T-cell (primary cell): ENCODE measurements at regions of chr21 and their contacts with region 1.

Region 1: GRCh38 chr21:30058928-30059327 is 107.7 kb downstream of the CLDN17 start:
- DNase-seq: no peak
- ATAC-seq: no peak
- H3K4me3 ChIP-seq: no peak overlapping the region
- H3K4me3 Mint-ChIP-seq: no peak overlapping the region
- H3K27ac ChIP-seq: no peak overlapping the region
- H3K27ac Mint-ChIP-seq: no peak overlapping the region
- H3K4me1 ChIP-seq: no peaks in the 10 kb centered on the region
- H3K4me1 Mint-ChIP-seq: no peaks in the 10 kb centered on the region
- H3K27me3 ChIP-seq: no peaks in the 10 kb centered on the region
- H3K27me3 Mint-ChIP-seq: peaks cover 0 to 3% of the 10 kb centered on the region in 2 donors

Region 2: GRCh38 chr21:29677326-29677725 is 381.6 kb before region 1 on chr21:
- CTCF ChIA-PET with region 1: no interaction called
- POLR2A ChIA-PET with region 1: no interaction called
- DNase-seq: no peak
- ATAC-seq: no peak
- H3K4me3 ChIP-seq: no peak overlapping the region
- H3K4me3 Mint-ChIP-seq: no peak overlapping the region
- H3K27ac ChIP-seq: no peak overlapping the region
- H3K27ac Mint-ChIP-seq: no peak overlapping the region
- H3K4me1 ChIP-seq: no peaks in the 10 kb centered on the region
- H3K4me1 Mint-ChIP-seq: no peaks in the 10 kb centered on the region
- H3K27me3 ChIP-seq: no peaks in the 10 kb centered on the region
- H3K27me3 Mint-ChIP-seq: peaks cover 0 to 6% of the 10 kb centered on the region in 2 donors

Region 3: GRCh38 chr21:29786496-29787360 is 272.2 kb before region 1 on chr21:
- CTCF ChIA-PET with region 1: no interaction called
- POLR2A ChIA-PET with region 1: no interaction called
- DNase-seq: no peak
- ATAC-seq: no peak
- H3K4me3 ChIP-seq: no peak overlapping the region
- H3K4me3 Mint-ChIP-seq: no peak overlapping the region
- H3K27ac ChIP-seq: no peak overlapping the region
- H3K27ac Mint-ChIP-seq: no peak overlapping the region
- H3K4me1 ChIP-seq: no peaks in the 10 kb centered on the region
- H3K4me1 Mint-ChIP-seq: no peaks in the 10 kb centered on the region
- H3K27me3 ChIP-seq: no peaks in the 10 kb centered on the region
- H3K27me3 Mint-ChIP-seq: peaks cover 0 to 3% of the 10 kb centered on the region in 2 donors

Region 4: DNA sequence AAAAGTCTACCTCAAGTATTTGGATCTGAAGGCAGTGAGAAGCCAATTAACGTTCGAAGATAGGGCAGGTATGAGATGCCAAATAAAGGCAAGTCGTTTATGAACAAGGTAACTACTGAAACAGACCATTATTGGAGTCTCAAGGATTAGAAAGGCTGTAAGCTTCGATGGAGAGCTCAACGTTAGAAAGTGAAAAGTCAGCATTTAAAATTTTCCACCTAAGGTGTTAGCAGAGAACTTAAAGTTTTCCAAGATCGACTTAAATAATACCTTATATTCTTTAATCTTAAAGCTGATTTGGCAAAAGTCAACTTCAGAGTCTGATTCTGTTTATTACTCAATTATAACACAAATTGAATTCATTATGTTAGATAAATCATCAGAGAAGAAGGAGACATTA is 79.6 kb after region 1 on chr21:
- CTCF ChIA-PET with region 1: no interaction called
- POLR2A ChIA-PET with region 1: interaction called in 1 of 2 experiments, 11 read pairs
- DNase-seq: no peak
- ATAC-seq: no peak
- H3K4me3 ChIP-seq: no peak overlapping the region
- H3K4me3 Mint-ChIP-seq: no peak overlapping the region
- H3K27ac ChIP-seq: no peak overlapping the region
- H3K27ac Mint-ChIP-seq: no peak overlapping the region
- H3K4me1 ChIP-seq: no peaks in the 10 kb centered on the region
- H3K4me1 Mint-ChIP-seq: no peaks in the 10 kb centered on the region
- H3K27me3 ChIP-seq: no peaks in the 10 kb centered on the region
- H3K27me3 Mint-ChIP-seq: no peaks in the 10 kb centered on the region

Region 5: DNA sequence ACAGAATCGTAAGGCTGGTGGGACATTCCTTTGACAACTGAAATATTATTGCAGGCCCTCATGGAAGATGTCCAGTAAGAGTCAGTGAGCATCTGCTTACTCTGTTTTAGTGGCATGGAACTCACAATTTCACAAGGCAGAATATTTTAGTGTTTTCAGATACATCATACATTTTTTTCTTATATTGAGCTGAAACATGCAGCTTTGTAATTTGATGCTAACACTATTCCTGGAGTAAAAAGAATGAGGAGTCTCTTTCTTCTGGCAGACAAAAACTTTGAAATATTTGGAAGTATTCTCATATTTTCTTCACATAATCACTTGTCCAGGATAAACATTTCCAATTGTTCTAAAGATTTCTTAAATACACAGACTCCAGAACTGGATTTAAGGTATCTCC is 90.0 kb after region 1 on chr21:
- CTCF ChIA-PET with region 1: no interaction called
- POLR2A ChIA-PET with region 1: no interaction called
- DNase-seq: no peak
- ATAC-seq: no peak
- H3K4me3 ChIP-seq: no peak overlapping the region
- H3K4me3 Mint-ChIP-seq: no peak overlapping the region
- H3K27ac ChIP-seq: no peak overlapping the region
- H3K27ac Mint-ChIP-seq: no peak overlapping the region
- H3K4me1 ChIP-seq: no peaks in the 10 kb centered on the region
- H3K4me1 Mint-ChIP-seq: no peaks in the 10 kb centered on the region
- H3K27me3 ChIP-seq: no peaks in the 10 kb centered on the region
- H3K27me3 Mint-ChIP-seq: peaks cover 0 to 3% of the 10 kb centered on the region in 2 donors